ENCODE measurements at regions of chr2 and their contacts with region 1.

Region 1: GRCh38 chr2:20015472-20016083 is 3.1 kb upstream of the MATN3 start:
- DNase-seq: no peak
- ATAC-seq: peak in 4 of 8 donors; percentile 41 to 57 (median 54)
- H3K4me3 ChIP-seq: no peak overlapping the region
- H3K27ac ChIP-seq: no peak overlapping the region
- H3K4me1 ChIP-seq: peaks cover 3 to 16% (median 11%) of the 10 kb centered on the region in 9 donors
- H3K27me3 ChIP-seq: peaks cover 0 to 38% (median 11%) of the 10 kb centered on the region in 7 donors
- CTCF ChIP-seq: peak; percentile 40 to 73 (median 64)

Region 2: DNA sequence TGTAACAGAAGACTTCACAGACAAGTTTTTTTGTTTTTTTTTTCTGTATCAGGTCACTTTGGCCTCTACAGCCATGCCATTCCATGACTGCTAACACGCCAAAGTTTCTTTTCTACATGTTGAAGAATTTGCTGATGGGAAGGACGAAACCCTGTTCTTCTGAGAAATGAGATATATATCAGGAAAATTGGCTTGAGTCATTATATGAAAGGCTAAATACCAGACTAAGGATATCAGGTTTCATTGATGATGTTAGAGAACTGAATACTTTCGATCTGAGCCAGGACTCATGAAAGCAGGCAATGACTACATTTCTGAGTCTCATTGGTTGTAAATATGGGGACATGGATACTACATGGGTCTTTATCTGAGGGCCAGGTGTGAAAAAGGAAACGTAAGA is 838.6 kb before region 1 on chr2:
- intact Hi-C with region 1: no loop called
- DNase-seq: no peak
- ATAC-seq: no peak
- H3K4me3 ChIP-seq: no peak overlapping the region
- H3K27ac ChIP-seq: no peak overlapping the region
- H3K4me1 ChIP-seq: peaks cover 0 to 16% (median 3%) of the 10 kb centered on the region in 9 donors
- H3K27me3 ChIP-seq: no peaks in the 10 kb centered on the region
- CTCF ChIP-seq: no peak

Region 3: GRCh38 chr2:19955544-19956422 is 59.8 kb before region 1 on chr2:
- intact Hi-C with region 1: loop called in 1 of 10 experiments (anchors 5 kb)
- DNase-seq: peak; percentile 25 to 54
- ATAC-seq: peak; percentile 73 to 89 (median 84)
- H3K4me3 ChIP-seq: no peak overlapping the region
- H3K27ac ChIP-seq: no peak overlapping the region
- H3K4me1 ChIP-seq: no peaks in the 10 kb centered on the region
- H3K27me3 ChIP-seq: no peaks in the 10 kb centered on the region
- CTCF ChIP-seq: peak; percentile 54 to 89 (median 81)

Region 4: DNA sequence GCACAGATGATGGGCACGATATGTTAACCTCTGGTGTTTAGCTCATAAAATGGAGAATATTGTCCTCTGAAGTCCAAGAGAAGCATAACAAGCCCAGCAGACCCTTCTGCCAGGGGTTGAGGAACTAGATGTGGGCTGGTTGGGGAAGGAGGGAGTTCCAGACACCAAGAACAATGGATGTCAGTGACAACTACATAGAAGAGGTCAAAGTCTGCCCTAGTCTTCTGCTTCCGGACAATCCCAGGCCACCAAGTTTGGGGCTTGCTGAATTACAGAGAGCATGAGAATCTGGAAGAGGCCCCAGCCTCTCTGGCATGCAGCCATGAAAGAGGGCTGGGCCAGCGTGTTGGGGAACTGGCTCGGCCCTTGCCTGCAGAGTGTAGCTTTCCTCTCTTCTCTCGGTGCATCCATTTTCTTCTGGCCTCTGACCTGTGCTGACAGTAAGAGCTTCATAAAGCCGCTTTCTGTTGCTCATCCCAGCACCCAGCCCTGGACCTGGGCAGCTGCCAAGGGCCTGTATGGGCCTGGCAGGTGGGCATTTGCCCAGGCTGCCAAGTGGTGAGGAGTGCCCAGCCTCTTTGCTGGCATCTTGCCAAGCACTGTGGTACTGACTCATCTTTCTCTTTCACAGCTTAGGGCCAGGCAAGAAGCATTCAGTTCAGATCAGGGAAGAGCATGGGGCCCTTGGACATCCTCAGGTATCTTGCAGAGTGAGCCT is 50.5 kb after region 1 on chr2:
- intact Hi-C with region 1: no loop called
- DNase-seq: peak; percentile 62 to 70
- ATAC-seq: peak; percentile 44 to 85 (median 74)
- H3K4me3 ChIP-seq: no peak overlapping the region
- H3K27ac ChIP-seq: peak overlapping the region in 8 of 10 donors; percentile 4 to 58 (median 46)
- H3K4me1 ChIP-seq: peaks cover 0 to 25% (median 11%) of the 10 kb centered on the region in 9 donors
- H3K27me3 ChIP-seq: no peaks in the 10 kb centered on the region
- CTCF ChIP-seq: no peak

Region 5: DNA sequence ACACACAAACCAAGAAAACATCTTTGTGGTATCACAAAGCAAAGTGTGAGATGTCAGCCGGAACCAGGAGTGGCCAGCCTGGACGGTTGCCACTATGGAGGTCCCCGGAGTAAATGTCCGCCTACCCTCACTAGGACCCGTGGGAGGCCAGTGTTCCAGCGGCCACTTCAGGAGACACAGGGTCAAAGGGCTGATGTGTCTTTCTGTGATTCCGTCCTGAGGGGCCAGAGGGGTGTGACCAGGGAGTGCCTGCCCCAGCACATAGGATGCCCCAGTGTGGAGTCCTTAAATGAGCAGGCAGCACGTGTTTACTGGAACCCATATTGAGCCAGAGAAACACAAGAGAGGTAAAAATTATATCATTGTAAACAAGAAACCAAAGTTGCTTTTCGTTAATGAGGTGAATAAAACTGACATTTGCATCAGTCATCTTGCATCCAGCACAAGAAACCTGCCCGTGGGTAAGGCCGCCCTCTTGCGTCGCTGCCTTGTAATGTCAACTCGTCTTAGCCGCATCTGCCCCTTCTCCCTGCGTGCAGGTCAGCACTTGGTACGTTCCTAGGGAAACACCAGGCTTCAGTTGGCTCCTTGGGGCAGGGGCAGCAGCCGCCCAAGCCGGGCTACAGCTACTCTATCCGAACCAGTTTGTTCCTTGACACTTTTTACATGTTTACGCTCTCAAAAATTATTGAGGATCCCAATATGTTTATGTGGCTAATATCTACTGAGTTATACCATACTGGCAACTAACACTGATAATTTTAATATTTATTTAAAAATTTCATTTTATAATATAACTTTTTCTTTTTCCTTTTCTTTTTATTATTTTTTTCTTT is 82.5 kb after region 1 on chr2:
- intact Hi-C with region 1: loop called (anchors 1 to 2 kb)
- DNase-seq: peak; percentile 79 to 85
- ATAC-seq: peak; percentile 76 to 89 (median 84)
- H3K4me3 ChIP-seq: no peak overlapping the region
- H3K27ac ChIP-seq: no peak overlapping the region
- H3K4me1 ChIP-seq: peaks cover 0 to 11% (median 6%) of the 10 kb centered on the region in 9 donors
- H3K27me3 ChIP-seq: peaks cover 0 to 4% (median 0%) of the 10 kb centered on the region in 7 donors
- CTCF ChIP-seq: peak; percentile 68 to 96 (median 91)

Measured in heart right ventricle (tissue), 16 donors.